Activated T-helper 1 cell treated with anti-CD3 and anti-CD28 coated beads, Interleukin-12 subunit alpha, Interleukin-12 subunit beta, Interleukin-2, Interleukin-4 antibody, amounts not matched to agents 30 ng/mL and 10 ng/mL and 1 ng/mL, durations not matched to agents 14 hours and 24 hours and 36 hours (primary cell): ENCODE measurements at regions of chr5 and their contacts with region 1.

Region 1: DNA sequence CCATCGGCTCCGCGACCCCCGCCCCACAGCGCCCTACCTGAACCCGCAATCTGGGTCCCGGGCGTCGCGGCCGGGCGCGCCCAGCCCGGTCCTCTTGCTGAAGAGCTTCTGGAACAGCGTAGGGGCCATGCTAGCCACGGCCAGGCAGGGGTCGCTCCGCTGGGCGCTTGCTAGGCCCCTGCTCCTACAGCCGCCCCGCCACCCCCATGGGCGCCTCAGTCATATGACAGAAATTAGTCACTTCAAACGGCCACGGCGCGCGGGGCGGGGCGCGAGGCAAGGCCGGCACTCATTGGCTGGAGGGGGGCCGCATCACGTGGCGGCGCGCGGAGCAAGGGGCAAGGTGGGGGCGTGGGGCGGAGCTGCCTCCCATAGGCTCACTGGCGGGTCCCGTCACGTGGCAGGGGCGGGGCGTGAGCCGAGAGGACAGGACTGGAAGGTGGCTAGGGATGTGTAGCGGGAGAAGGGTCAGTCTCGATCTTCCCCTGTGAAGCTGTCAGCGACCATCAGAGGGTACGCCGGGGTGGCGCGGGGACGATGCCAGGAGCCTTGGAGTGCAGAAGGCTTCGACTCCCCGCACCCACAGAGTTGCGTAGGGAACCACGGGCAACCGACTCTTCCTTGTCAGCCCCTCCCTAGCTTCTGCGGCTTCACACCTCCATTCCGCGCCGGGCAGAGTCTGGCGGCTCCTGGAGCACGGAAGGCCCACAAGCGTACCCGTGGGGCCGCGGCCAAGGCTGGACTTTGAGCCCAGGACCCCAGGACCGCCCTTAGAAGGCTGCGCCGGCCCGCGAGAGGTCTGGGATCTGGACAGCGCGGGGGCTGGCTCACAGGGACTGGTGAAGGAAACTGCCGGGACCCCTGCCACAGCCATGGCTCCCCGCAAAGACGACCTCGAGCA is at the start of gene FNIP1:
- DNase-seq: peak; percentile 98
- H3K4me3 Mint-ChIP-seq: peak within 1 kb of the TSS; percentile 97
- H3K27ac Mint-ChIP-seq: peak within 1 kb of the TSS; percentile 93
- H3K4me1 Mint-ChIP-seq: peaks cover 21% of the 10 kb centered on the region
- H3K27me3 Mint-ChIP-seq: peaks cover under 1% of the 10 kb centered on the region
- total RNA-seq, gene FNIP1: 18.8 and 19.0 TPM in 2 replicates

Region 2: GRCh38 chr5:131252824-131253171 is 544.2 kb before region 1 on chr5:
- intact Hi-C with region 1: loop called (anchors 10 kb)
- DNase-seq: peak; percentile 78
- H3K4me3 Mint-ChIP-seq: peak overlapping the region; percentile 89
- H3K27ac Mint-ChIP-seq: peak overlapping the region; percentile 99
- H3K4me1 Mint-ChIP-seq: peaks cover 69% of the 10 kb centered on the region
- H3K27me3 Mint-ChIP-seq: no peaks in the 10 kb centered on the region

Region 3: GRCh38 chr5:131589510-131590348 is 207.3 kb before region 1 on chr5:
- intact Hi-C with region 1: loop called (anchors 1 kb)
- DNase-seq: no peak
- H3K4me3 Mint-ChIP-seq: no peak overlapping the region
- H3K27ac Mint-ChIP-seq: no peak overlapping the region
- H3K4me1 Mint-ChIP-seq: peaks cover 39% of the 10 kb centered on the region
- H3K27me3 Mint-ChIP-seq: peaks cover 1% of the 10 kb centered on the region

Region 4: DNA sequence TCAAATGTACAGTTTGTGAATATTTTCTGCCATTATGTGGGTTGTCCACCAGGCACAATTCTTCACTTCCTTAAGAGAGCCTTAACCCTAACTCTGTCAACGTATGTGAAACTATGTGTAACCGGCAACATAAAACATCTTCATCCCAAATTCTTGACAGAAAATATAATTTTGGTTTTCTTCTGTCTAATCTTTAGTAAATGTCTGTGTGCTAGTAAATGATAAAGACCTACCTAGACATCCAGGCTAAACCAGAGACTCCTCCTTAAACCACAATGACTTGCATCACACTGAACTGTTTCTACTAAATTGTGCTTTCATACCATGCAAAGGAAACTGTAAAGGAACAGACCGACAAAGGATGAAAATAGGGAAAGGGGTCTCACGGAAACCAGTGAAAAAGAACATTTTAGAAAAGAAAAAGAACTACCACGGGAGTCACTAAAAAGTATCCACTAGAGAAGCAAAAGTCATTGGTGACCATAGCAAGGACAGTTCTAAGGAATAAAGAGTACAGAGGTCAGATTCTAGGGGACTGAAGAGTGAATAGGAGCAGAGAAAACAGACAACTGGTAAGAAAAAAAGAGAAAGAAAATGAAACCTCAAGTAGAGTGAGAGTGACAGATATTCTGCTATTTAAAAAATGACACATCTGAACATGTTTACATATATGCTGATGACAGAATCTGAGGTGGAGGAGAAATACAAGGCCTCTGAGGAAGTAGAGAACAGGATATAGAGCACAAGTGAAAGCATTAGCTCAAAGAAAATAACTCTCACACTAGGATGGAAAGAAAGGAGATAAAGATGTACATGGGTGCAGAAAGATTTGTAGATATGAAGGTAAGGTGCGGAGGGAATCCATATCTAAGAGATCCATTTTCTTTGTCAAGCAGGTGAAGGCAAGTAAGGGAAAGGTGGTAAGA is 49.6 kb before region 1 on chr5:
- intact Hi-C with region 1: loop called (anchors 1 kb)
- DNase-seq: no peak
- H3K4me3 Mint-ChIP-seq: peak overlapping the region; percentile 40
- H3K27ac Mint-ChIP-seq: peak overlapping the region; percentile 85
- H3K4me1 Mint-ChIP-seq: peaks cover 40% of the 10 kb centered on the region
- H3K27me3 Mint-ChIP-seq: no peaks in the 10 kb centered on the region

Region 5: DNA sequence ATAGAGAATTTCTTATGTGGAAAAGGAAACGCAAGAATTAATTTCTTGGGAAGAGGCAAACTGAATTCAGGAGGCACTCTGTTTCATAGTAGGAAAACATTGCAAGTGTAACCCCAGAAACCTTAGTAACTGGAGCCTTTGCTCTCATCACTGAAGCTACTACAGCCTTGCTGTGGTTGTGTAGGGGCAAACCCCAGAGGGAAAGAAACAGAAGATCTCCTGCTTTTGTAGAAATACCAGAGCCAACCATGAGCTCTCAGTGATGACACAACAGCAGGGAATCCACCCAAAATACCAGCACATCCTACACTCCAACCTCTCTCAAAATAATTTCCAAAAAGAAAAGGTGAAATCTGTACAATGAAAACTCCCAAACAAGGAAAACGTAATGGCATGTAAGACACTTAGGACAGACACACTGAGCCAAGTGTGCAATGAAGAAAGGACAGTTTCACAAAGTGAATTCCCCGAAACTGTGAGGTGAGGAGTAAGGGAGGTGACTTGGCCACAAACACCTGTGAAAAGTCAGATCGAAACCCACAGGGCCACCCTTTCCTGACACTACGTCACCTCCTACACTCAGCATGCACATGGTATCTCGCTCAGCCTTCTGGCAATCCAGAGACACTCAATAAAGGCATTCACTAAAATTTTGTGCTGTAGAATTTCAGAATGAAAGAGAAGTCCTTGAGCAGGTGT is 223.0 kb after region 1 on chr5:
- intact Hi-C with region 1: loop called (anchors 5 kb)
- DNase-seq: peak; percentile 85
- H3K4me3 Mint-ChIP-seq: peak overlapping the region; percentile 50
- H3K27ac Mint-ChIP-seq: peak overlapping the region; percentile 92
- H3K4me1 Mint-ChIP-seq: peaks cover 51% of the 10 kb centered on the region
- H3K27me3 Mint-ChIP-seq: peaks cover 48% of the 10 kb centered on the region

Region 6: DNA sequence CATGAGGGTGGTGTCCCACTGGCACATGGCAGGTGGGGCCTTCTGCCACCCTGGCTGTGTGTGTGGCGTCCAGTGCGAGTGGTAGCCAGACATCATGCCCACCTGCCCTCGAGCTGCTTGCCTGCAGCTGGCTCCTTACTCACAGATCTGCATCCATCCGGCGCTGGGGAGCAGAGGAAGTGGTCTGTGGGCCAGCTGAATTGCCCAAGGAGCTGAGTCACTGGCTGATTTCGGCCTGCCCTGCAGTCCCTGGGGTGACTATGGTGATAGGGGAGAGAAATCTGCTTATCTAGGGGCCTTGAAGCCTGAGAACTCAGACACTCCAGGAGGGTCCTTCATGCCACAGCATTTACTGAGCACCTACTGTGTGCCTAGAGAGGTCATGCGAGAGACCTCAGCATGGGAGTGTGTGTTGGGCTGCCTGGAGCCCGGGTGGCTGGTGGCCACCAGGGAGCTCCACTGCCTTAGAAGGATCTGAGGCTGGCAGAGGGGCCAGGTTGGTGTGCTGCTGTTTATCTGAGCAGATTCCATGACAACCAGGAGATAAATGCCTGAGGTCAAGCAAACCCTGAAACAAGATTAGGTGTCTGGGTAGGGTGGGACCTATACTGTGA is 629.6 kb after region 1 on chr5:
- intact Hi-C with region 1: loop called (anchors 5 kb)
- DNase-seq: peak; percentile 67
- H3K4me3 Mint-ChIP-seq: peak overlapping the region; percentile 72
- H3K27ac Mint-ChIP-seq: peak overlapping the region; percentile 98
- H3K4me1 Mint-ChIP-seq: peaks cover 97% of the 10 kb centered on the region
- H3K27me3 Mint-ChIP-seq: no peaks in the 10 kb centered on the region